MCF 10A (cell line): ENCODE measurements at regions of chr20 and their contacts with region 1.

Region 1: GRCh38 chr20:10090588-10091166 is 55.9 kb downstream of the ANKEF1 start:
- DNase-seq: peak; percentile 69
- H3K4me3 Mint-ChIP-seq: no peak overlapping the region
- H3K27ac Mint-ChIP-seq: no peak overlapping the region
- H3K4me1 Mint-ChIP-seq: peaks cover 11% of the 10 kb centered on the region
- H3K27me3 Mint-ChIP-seq: no peaks in the 10 kb centered on the region
- CTCF ChIP-seq: peak; percentile 57

Region 2: GRCh38 chr20:9966966-9967365 is 123.7 kb before region 1 on chr20:
- CTCF ChIA-PET with region 1: interaction called, 52 read pairs
- POLR2A ChIA-PET with region 1: interaction called, 4 read pairs
- intact Hi-C with region 1: no loop called
- DNase-seq: peak; percentile 37
- H3K4me3 Mint-ChIP-seq: no peak overlapping the region
- H3K27ac Mint-ChIP-seq: no peak overlapping the region
- H3K4me1 Mint-ChIP-seq: no peaks in the 10 kb centered on the region
- H3K27me3 Mint-ChIP-seq: no peaks in the 10 kb centered on the region
- CTCF ChIP-seq: peak; percentile 41

Region 3: GRCh38 chr20:10034717-10035571 is 55.7 kb before region 1 on chr20 and contains the start of gene ANKEF1:
- CTCF ChIA-PET with region 1: interaction called, 128 read pairs
- POLR2A ChIA-PET with region 1: interaction called, 7 read pairs
- intact Hi-C with region 1: loop called (anchors 1 kb)
- DNase-seq: peak; percentile 72
- H3K4me3 Mint-ChIP-seq: peak within 1 kb of the TSS; percentile 73
- H3K27ac Mint-ChIP-seq: peak within 1 kb of the TSS; percentile 57
- H3K4me1 Mint-ChIP-seq: peaks cover 1% of the 10 kb centered on the region
- H3K27me3 Mint-ChIP-seq: no peaks in the 10 kb centered on the region
- CTCF ChIP-seq: no peak
- total RNA-seq, gene ANKEF1: 5.6 and 7.2 TPM in 2 replicates

Region 4: DNA sequence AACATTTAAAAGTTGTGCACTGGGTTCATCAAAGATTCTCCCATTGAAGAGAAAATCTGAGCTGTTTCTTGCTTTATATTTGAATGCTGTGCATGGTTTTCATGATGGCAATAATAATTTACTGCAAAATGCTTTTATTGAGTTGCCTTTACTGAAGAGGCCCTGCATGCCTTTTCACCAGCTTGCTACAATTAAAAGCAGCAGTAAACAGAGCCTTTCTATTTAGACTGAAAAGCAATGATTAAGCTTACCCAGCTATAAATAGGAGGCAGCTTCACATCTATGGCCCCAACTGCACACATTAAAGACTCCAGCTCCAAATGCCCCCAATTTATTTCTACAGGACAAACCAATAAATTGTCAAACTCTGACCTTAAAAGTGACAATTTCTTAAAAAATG is 14.4 kb after region 1 on chr20:
- CTCF ChIA-PET with region 1: interaction called, 63 read pairs
- POLR2A ChIA-PET with region 1: interaction called, 8 read pairs
- intact Hi-C with region 1: no loop called
- DNase-seq: no peak
- H3K4me3 Mint-ChIP-seq: no peak overlapping the region
- H3K27ac Mint-ChIP-seq: no peak overlapping the region
- H3K4me1 Mint-ChIP-seq: no peaks in the 10 kb centered on the region
- H3K27me3 Mint-ChIP-seq: no peaks in the 10 kb centered on the region
- CTCF ChIP-seq: no peak

Region 5: DNA sequence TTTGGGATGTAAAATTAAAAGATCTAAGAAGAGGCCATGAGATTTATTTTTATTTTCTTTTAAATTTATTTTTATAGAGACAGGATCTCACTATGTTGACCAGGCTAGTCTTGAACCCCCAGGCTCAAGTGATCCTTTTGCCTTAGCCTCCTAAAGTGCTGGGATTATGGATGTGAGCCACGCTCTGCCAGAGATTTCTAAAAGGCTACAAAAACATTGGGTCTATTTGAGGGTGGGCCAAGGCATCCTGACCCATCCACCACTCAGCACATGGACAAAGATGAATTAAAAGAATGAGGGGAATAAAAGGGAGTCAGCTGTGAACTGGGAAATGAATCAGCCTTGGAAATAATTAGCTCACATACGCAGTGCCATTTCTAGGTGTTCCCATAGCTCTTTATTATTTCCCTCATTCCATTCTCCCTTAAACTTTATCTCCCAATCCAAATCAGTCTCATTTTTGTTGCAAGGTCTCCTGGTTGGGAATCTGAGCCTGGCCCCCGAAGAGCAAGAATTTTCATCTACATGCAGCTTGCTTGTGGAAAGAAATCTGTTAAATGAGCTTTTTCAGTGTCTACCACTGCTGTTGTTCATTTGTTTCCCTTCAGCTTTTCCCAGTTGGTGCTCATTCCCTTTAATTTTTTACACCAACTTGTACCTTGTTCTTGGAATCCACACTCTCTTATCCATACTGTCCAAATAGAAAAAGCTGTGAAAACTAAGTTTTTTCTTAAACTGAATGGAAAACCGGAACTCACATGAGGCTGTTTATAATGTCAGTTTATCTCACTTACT is 276.4 kb after region 1 on chr20:
- CTCF ChIA-PET with region 1: no interaction called
- POLR2A ChIA-PET with region 1: no interaction called
- intact Hi-C with region 1: no loop called
- DNase-seq: no peak
- H3K4me3 Mint-ChIP-seq: no peak overlapping the region
- H3K27ac Mint-ChIP-seq: no peak overlapping the region
- H3K4me1 Mint-ChIP-seq: peaks cover 6% of the 10 kb centered on the region
- H3K27me3 Mint-ChIP-seq: no peaks in the 10 kb centered on the region
- CTCF ChIP-seq: no peak

Region 6: DNA sequence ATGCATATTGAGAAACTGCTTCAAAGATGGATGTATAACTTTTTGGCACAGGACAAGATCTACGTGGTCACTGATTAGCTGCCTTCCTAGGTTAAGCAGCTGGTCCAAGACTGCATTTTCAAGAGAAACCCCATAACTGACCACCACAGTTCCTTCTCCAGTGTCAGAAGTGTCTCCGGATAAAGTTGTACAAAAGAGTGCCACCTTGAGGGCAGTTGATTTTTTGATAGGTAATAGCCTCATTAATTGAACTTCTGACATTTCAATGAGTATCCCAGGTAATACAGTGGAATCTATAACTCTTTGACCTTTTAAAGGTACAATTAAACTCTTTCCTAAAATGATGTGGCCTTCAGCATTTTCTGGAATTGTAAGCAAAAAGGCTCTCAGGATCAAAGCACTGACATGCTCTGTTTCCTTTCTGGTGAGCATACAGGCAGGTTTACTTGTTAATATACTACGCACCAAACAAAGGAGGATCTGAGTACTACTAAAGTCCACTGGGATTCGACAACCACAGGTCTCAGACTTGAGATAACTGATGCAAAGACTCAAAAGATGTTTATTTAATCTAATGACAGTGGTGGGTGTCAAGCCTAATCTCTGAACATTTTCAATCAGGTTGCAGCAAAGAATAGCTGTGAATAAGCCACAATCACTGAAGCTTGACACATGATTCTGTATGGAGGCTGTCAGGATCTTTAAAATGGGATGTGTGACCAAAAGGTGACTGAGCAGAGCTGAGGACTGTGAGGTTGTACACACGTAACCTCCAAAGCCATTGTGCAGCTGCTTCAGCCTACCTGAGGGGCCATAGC is 322.1 kb after region 1 on chr20:
- CTCF ChIA-PET with region 1: interaction called, 40 read pairs
- POLR2A ChIA-PET with region 1: interaction called, 3 read pairs
- intact Hi-C with region 1: no loop called
- DNase-seq: no peak
- H3K4me3 Mint-ChIP-seq: no peak overlapping the region
- H3K27ac Mint-ChIP-seq: no peak overlapping the region
- H3K4me1 Mint-ChIP-seq: peaks cover 28% of the 10 kb centered on the region
- H3K27me3 Mint-ChIP-seq: no peaks in the 10 kb centered on the region
- CTCF ChIP-seq: no peak

Region 7: GRCh38 chr20:10667077-10667401 is 576.4 kb after region 1 on chr20:
- CTCF ChIA-PET with region 1: interaction called, 4 read pairs
- POLR2A ChIA-PET with region 1: no interaction called
- intact Hi-C with region 1: loop called (anchors 5 kb)
- DNase-seq: peak; percentile 78
- H3K4me3 Mint-ChIP-seq: peak overlapping the region; percentile 33
- H3K27ac Mint-ChIP-seq: peak overlapping the region; percentile 68
- H3K4me1 Mint-ChIP-seq: peaks cover 46% of the 10 kb centered on the region
- H3K27me3 Mint-ChIP-seq: no peaks in the 10 kb centered on the region
- CTCF ChIP-seq: no peak